ENCODE measurements at regions of chr20 and their contacts with region 1.

Region 1: DNA sequence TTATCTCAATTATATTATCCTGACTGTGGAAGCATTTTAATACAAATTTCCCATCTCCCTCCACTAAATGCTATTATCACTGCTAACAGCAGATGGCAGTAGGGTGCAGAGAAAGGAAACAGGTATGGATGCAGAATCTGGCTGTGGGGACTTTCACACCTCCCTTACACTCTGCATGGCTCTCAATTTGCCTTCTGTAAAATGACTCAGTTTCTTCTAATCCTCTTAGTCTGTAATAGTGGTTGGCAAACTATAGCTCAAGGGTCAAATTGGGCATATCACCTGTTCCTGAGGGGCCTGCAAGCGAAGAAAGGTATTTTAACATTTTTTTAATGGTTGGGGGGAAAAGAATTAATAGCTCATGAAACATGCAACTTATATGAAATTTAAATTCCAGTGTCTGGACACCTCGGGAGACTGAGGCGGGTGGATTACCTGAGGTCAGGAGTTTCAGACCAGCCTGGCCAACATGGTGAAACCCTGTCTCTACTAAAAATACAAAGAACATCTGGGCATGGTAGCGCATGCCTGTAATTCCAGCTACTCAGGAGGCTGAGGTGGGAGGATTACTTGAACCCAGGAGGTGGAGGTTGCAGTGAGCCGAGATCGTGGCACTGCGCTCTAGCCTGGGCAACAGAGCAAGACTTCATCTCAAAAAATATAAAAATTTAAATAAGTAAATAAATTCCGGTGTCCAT is 83.5 kb downstream of the ZMYND8 start:
- DNase-seq: peak; percentile 73
- H3K4me3 ChIP-seq: no peak overlapping the region; a peak in 1 of 4 replicates
- H3K27ac ChIP-seq: peak overlapping the region in 1 of 2 experiments; percentile 97; a peak in 2 of 4 replicates
- H3K4me1 ChIP-seq: peaks cover 20 to 48% of the 10 kb centered on the region in 2 experiments
- H3K27me3 ChIP-seq: no peaks in the 10 kb centered on the region
- CTCF ChIP-seq: peak; percentile 95
- EP300 ChIP-seq: no peak
- RAD21 ChIP-seq: peak; percentile 95

Region 2: GRCh38 chr20:47196091-47197081 is 76.7 kb before region 1 on chr20:
- CTCF ChIA-PET with region 1: interaction called, 37 read pairs
- POLR2A ChIA-PET with region 1: no interaction called
- DNase-seq: peak; percentile 83
- H3K4me3 ChIP-seq: no peak overlapping the region; a peak in 1 of 4 replicates
- H3K27ac ChIP-seq: no peak overlapping the region
- H3K4me1 ChIP-seq: peaks cover 0 to 2% of the 10 kb centered on the region in 2 experiments; a peak in 1 of 4 replicates
- H3K27me3 ChIP-seq: no peaks in the 10 kb centered on the region
- CTCF ChIP-seq: peak; percentile 94
- EP300 ChIP-seq: no peak
- RAD21 ChIP-seq: peak; percentile 93

Region 3: GRCh38 chr20:47258745-47259695 is 14.0 kb before region 1 on chr20:
- CTCF ChIA-PET with region 1: interaction called, 34 read pairs
- POLR2A ChIA-PET with region 1: no interaction called
- DNase-seq: no peak
- H3K4me3 ChIP-seq: no peak overlapping the region
- H3K27ac ChIP-seq: no peak overlapping the region; a peak in 1 of 4 replicates
- H3K4me1 ChIP-seq: peaks cover 6 to 21% of the 10 kb centered on the region in 2 experiments; a peak in 3 of 4 replicates
- H3K27me3 ChIP-seq: no peaks in the 10 kb centered on the region
- CTCF ChIP-seq: no peak
- EP300 ChIP-seq: no peak
- RAD21 ChIP-seq: no peak

Region 4: GRCh38 chr20:47304287-47304686 is 31.2 kb after region 1 on chr20:
- CTCF ChIA-PET with region 1: interaction called, 10 read pairs
- POLR2A ChIA-PET with region 1: no interaction called
- DNase-seq: peak; percentile 57
- H3K4me3 ChIP-seq: no peak overlapping the region
- H3K27ac ChIP-seq: peak overlapping the region; percentile 8 to 78; a peak in 3 of 4 replicates
- H3K4me1 ChIP-seq: peaks cover 4 to 21% of the 10 kb centered on the region in 2 experiments; a peak in 3 of 4 replicates
- H3K27me3 ChIP-seq: no peaks in the 10 kb centered on the region
- CTCF ChIP-seq: peak; percentile 33
- EP300 ChIP-seq: peak in 1 of 2 experiments; percentile 63; a peak in 2 of 4 replicates
- RAD21 ChIP-seq: peak; percentile 48

Region 5: GRCh38 chr20:47370850-47371676 is 98.0 kb after region 1 on chr20:
- CTCF ChIA-PET with region 1: interaction called, 546 read pairs
- POLR2A ChIA-PET with region 1: no interaction called
- DNase-seq: no peak
- H3K4me3 ChIP-seq: no peak overlapping the region
- H3K27ac ChIP-seq: no peak overlapping the region
- H3K4me1 ChIP-seq: no peaks in the 10 kb centered on the region
- H3K27me3 ChIP-seq: no peaks in the 10 kb centered on the region
- CTCF ChIP-seq: no peak
- EP300 ChIP-seq: no peak
- RAD21 ChIP-seq: no peak